CD8-positive, alpha-beta T cell (primary cell): ENCODE measurements at regions of chr2 and their contacts with region 1.

Region 1: GRCh38 chr2:173545364-173545763 is 190.7 kb downstream of the CDCA7 start:
- DNase-seq: no peak
- ATAC-seq: no peak
- H3K4me3 ChIP-seq: no peak overlapping the region
- H3K4me3 Mint-ChIP-seq: no peak overlapping the region
- H3K27ac ChIP-seq: no peak overlapping the region
- H3K27ac Mint-ChIP-seq: no peak overlapping the region
- H3K4me1 ChIP-seq: no peaks in the 10 kb centered on the region
- H3K4me1 Mint-ChIP-seq: no peaks in the 10 kb centered on the region
- H3K27me3 ChIP-seq: peaks cover 0 to 2% of the 10 kb centered on the region in 2 experiments
- H3K27me3 Mint-ChIP-seq: peaks cover 10% of the 10 kb centered on the region
- CTCF ChIP-seq: no peak

Region 2: DNA sequence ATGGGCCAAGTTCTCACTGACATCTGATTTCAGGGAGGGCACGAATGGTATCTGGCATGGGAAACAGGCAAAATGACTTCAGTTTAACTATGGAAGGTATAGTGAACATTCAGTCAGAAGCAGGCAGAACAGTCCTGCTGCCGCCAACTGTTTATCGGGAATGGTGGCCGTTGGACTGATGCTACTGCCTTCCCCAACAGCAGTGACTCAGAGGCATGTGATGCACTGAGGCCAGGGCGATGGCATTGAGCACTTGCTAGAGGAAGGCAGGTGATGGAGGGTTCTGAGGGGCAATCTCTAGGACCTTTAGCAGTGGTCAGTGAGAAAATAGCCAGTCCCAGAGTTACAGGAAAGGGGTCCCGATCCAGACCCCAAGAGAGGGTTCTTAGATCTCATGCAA is 41.0 kb before region 1 on chr2:
- CTCF ChIA-PET with region 1: no interaction called
- POLR2A ChIA-PET with region 1: no interaction called
- intact Hi-C with region 1: loop called in 1 of 2 experiments (anchors 1 kb)
- DNase-seq: no peak
- ATAC-seq: no peak
- H3K4me3 ChIP-seq: no peak overlapping the region
- H3K4me3 Mint-ChIP-seq: no peak overlapping the region
- H3K27ac ChIP-seq: no peak overlapping the region
- H3K27ac Mint-ChIP-seq: no peak overlapping the region
- H3K4me1 ChIP-seq: no peaks in the 10 kb centered on the region
- H3K4me1 Mint-ChIP-seq: no peaks in the 10 kb centered on the region
- H3K27me3 ChIP-seq: no peaks in the 10 kb centered on the region
- H3K27me3 Mint-ChIP-seq: peaks cover 15% of the 10 kb centered on the region
- CTCF ChIP-seq: no peak

Region 3: DNA sequence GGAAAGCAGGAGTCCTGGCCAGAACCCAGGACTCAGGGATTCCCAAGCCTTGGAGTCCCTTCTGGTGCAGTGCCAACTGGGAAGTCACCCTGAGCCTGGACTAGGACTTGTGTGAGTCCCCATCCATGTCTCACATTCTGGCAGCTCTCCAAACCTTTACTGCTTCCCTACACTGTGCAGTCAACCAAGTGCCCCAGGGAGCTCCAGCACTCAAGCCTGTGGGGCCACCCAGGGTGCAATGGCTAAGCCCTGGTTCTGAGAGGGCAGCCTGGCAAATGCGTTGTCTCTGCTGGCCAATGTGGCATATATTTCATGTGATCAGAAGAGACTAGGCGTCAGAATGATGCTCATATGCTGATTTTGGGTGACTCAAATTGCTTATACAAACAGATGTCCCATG is 196.4 kb after region 1 on chr2:
- CTCF ChIA-PET with region 1: no interaction called
- POLR2A ChIA-PET with region 1: no interaction called
- intact Hi-C with region 1: no loop called
- DNase-seq: no peak
- ATAC-seq: no peak
- H3K4me3 ChIP-seq: no peak overlapping the region
- H3K4me3 Mint-ChIP-seq: no peak overlapping the region
- H3K27ac ChIP-seq: no peak overlapping the region
- H3K27ac Mint-ChIP-seq: no peak overlapping the region
- H3K4me1 ChIP-seq: no peaks in the 10 kb centered on the region
- H3K4me1 Mint-ChIP-seq: no peaks in the 10 kb centered on the region
- H3K27me3 ChIP-seq: no peaks in the 10 kb centered on the region
- H3K27me3 Mint-ChIP-seq: peaks cover 27% of the 10 kb centered on the region
- CTCF ChIP-seq: no peak

Region 4: DNA sequence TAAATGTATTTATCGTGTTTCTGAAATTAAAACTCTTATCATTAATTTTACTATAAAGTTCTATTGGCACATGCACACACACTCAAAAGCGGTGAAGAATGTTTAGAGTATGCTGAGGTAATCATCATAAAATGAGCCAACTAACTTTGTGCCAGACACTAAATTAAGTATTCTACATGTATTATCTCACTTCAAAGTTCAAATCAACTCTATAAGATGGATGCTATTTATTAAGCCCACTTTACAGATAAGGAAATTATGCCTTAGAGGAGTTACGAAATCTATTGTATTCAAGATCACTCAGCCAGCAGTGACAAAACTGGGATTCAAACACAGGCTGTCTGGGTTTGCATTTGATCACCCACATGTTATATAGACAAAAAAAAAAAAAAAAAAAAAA is 678.0 kb after region 1 on chr2:
- CTCF ChIA-PET with region 1: no interaction called
- POLR2A ChIA-PET with region 1: no interaction called
- intact Hi-C with region 1: no loop called
- DNase-seq: no peak
- ATAC-seq: no peak
- H3K4me3 ChIP-seq: no peak overlapping the region
- H3K4me3 Mint-ChIP-seq: no peak overlapping the region
- H3K27ac ChIP-seq: no peak overlapping the region
- H3K27ac Mint-ChIP-seq: no peak overlapping the region
- H3K4me1 ChIP-seq: no peaks in the 10 kb centered on the region
- H3K4me1 Mint-ChIP-seq: no peaks in the 10 kb centered on the region
- H3K27me3 ChIP-seq: no peaks in the 10 kb centered on the region
- H3K27me3 Mint-ChIP-seq: no peaks in the 10 kb centered on the region
- CTCF ChIP-seq: no peak